A549 (cell line): ENCODE measurements at regions of chr7 and their contacts with region 1.

Region 1: DNA sequence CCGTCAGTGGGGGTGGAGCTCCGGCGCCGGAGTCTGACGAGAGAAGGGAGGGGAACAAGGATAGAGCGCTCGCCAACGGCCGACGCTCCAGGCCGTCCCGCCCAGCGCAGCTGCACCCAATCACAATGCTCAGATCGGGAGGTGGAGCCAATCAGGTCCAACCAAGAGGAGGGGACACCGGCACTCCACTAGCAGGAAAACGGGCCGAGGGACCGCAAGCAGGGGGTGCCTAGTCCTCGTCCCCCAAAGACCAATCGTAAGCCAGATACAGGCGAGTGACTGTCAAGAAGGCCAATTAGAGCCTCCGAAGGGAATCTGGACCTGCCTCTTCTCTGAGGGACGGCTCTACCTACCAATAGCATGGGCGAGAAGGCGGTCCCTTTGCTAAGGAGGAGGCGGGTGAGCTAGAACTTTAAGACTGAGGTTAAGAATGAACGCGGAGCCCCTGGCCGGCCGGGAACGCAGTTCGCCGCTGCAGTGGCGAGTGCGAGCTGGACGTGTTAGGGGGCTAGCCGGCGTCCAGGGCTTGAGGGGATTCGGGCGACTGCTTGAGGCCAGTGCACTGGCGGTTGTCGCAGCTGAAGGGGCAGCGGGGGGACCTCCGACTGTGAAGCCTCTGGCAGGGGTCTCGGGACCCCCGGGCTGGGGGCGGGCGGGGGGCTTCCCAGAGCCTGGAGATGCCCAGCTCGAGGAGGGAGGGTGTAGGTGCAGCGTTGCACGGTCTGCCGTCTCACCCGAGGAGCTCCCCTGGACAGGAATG is at the start of gene FBXO24:
- DNase-seq: peak; percentile 100
- ATAC-seq: peak; percentile 88 to 95
- H3K4me3 ChIP-seq: peak within 1 kb of the TSS; percentile 99
- H3K27ac ChIP-seq: peak within 1 kb of the TSS; percentile 95 to 99
- H3K4me1 ChIP-seq: peaks cover 15% of the 10 kb centered on the region
- CTCF ChIP-seq: no peak
- EP300 ChIP-seq: no peak
- POLR2A ChIP-seq: peak; percentile 79
- RAD21 ChIP-seq: no peak
- polyA plus RNA-seq, gene FBXO24: 0.36 and 0.52 TPM in 2 replicates

Region 2: DNA sequence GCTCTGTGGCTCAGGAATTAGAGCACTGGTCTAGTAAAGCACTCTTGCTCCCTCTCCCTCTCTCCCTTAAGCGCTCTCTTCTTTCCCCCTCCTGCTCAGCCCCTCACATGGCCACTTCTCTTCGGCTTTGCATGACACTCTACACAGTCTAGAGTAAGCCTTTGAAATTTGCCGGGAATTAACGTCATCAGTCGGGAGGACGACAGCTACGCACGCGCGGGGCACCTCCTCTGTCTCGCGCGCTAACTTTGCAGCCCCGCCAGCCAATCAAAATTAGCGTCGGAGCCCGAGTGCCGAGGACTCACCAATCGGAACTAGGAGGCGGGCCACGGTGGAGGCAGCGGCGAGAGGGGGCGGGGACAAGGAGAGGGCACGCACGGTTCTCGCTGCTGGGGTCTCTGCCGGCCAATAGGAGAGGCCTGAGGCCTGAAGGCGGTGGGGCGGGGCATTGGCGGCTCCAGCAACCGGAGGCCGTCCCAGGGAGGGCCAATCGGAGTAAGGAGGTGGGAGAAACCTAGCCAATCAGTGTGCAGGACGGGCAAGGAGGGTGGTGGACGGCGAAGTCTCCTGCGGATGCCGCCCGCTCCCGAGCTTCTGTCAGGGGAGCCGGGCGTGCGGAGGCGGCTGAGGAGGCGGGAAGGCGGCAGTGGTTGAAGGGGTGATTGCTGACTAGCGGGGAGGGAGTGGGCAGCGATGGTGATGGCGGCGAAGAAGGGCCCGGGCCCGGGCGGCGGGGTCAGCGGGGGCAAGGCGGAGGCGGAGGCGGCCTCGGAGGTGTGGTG is 47.6 kb before region 1 on chr7 and contains the start of gene AGFG2:
- CTCF ChIA-PET with region 1: no interaction called
- POLR2A ChIA-PET with region 1: interaction called, 13 read pairs
- DNase-seq: peak; percentile 99 to 100
- ATAC-seq: peak; percentile 97 to 99
- H3K4me3 ChIP-seq: peak within 1 kb of the TSS; percentile 68
- H3K27ac ChIP-seq: peak within 1 kb of the TSS; percentile 71 to 88
- H3K4me1 ChIP-seq: peaks cover 38% of the 10 kb centered on the region
- CTCF ChIP-seq: no peak
- EP300 ChIP-seq: no peak
- POLR2A ChIP-seq: peak; percentile 62
- RAD21 ChIP-seq: no peak; a peak in 1 of 5 replicates
- polyA plus RNA-seq, gene AGFG2: 13.5 and 16.0 TPM in 2 replicates

Region 3: GRCh38 chr7:100575746-100576383 is 10.6 kb before region 1 on chr7:
- CTCF ChIA-PET with region 1: interaction called, 4 read pairs
- POLR2A ChIA-PET with region 1: interaction called, 21 read pairs
- DNase-seq: no peak
- ATAC-seq: no peak
- H3K4me3 ChIP-seq: no peak overlapping the region
- H3K27ac ChIP-seq: no peak overlapping the region
- H3K4me1 ChIP-seq: peaks cover 9% of the 10 kb centered on the region; the same call in 1 of the 3 replicates
- CTCF ChIP-seq: no peak
- EP300 ChIP-seq: no peak
- POLR2A ChIP-seq: no peak
- RAD21 ChIP-seq: no peak

Region 4: DNA sequence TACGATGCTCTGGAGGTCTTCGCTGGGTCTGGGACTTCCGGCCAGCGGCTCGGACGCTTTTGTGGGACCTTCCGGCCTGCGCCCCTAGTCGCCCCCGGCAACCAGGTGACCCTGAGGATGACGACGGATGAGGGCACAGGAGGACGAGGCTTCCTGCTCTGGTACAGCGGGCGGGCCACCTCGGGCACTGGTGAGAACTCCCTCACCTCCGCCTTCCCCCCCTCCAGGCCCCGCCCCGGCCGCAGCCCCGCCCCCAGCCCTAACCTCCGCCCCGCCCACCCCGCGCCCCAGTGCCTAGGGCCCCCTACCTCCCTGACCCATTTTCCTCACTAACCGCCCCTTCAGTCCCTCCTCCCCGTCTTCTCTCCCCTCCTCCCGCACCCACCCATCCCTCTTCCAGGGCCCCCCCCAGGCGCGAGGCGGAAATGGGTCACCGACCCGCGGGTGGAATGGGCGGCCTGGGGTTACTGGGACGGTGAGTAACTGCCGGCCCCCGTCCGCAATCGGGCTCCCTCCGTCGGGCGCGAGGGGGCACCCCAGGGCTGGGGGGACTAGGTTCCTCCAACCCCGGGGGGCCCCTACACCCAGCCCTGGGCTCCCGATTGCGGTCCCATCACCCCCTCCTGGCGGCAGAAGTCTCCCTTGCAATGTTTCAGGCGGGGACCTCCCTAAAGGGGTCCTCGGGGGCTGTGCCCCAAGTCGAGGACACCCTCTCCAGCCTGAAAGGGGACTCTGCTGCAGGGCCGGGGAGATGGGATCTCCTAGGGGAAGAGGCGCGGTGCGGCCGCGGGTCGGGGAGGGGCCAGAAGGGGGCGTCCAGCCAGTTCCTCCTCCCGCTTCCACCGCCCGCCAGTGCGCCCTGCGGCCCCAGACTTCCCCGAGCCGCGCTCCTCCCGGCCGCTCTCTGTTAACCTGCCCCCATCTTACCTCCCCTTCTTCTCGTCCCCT is 17.9 kb after region 1 on chr7:
- CTCF ChIA-PET with region 1: interaction called, 23 read pairs
- POLR2A ChIA-PET with region 1: interaction called, 17 read pairs
- DNase-seq: peak; percentile 78 to 90
- ATAC-seq: peak; percentile 80 to 90
- H3K4me3 ChIP-seq: peak overlapping the region; percentile 74
- H3K27ac ChIP-seq: peak overlapping the region; percentile 84 to 86
- H3K4me1 ChIP-seq: 0 out of 3 replicates have a peak, but pooled peaks cover 8% of the 10 kb centered on the region
- CTCF ChIP-seq: peak; percentile 53
- EP300 ChIP-seq: no peak
- POLR2A ChIP-seq: peak; percentile 33; the same call in 1 of the 2 replicates
- RAD21 ChIP-seq: no peak; a peak in 3 of 5 replicates

Region 5: GRCh38 chr7:100611974-100612729 is 25.7 kb after region 1 on chr7 and contains the start of gene MOSPD3:
- CTCF ChIA-PET with region 1: interaction called, 23 read pairs
- POLR2A ChIA-PET with region 1: interaction called, 28 read pairs
- DNase-seq: peak; percentile 99 to 100
- ATAC-seq: peak; percentile 97
- H3K4me3 ChIP-seq: peak within 1 kb of the TSS; percentile 67
- H3K27ac ChIP-seq: peak within 1 kb of the TSS; percentile 83 to 90
- H3K4me1 ChIP-seq: peaks cover 4% of the 10 kb centered on the region; the same call in 1 of the 3 replicates
- CTCF ChIP-seq: no peak
- EP300 ChIP-seq: no peak
- POLR2A ChIP-seq: peak; percentile 43
- RAD21 ChIP-seq: no peak
- polyA plus RNA-seq, gene MOSPD3: 4.6 and 6.1 TPM in 2 replicates